WTC11 (cell line): ENCODE measurements at regions of chr3 and their contacts with region 1.

Region 1: DNA sequence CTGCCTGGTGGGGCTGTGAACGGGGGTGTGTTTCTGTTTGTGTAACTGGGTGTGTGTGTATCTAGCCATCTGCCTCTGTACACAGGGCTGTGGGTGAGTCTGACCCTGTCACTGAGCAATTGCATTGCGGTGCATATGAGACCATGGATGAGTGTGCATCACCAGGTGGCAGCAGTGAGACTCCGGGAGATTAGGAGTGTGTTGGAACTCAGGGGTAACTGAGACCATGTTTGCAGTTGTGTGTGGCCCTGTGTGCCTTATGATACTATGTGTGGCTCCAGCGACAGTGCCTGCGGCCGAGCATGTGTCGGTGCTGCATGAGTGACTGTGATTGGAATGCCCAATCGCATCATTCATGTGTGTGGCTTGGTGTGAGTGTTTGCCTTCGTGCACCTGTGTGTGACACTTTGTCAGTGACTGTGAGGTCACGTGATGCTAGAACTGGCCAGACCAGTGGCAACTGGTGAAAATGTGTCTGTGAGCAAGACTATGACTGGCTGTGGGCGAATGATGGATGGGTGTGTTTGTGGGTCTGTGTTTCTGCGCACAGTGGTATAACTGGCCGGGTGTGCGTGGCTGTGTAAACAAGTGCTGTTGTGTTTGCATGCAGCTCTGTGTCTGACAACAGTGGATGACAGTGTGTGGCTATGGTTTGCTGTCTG is 14.0 kb downstream of the VILL start:
- DNase-seq: peak; percentile 72
- ATAC-seq: peak; percentile 58
- H3K4me3 Mint-ChIP-seq: no peak overlapping the region
- H3K27ac Mint-ChIP-seq: peak overlapping the region; percentile 76; the same call in 1 of the 2 replicates
- H3K4me1 Mint-ChIP-seq: peaks cover 5% of the 10 kb centered on the region
- H3K27me3 Mint-ChIP-seq: no peaks in the 10 kb centered on the region
- CTCF ChIP-seq: no peak

Region 2: GRCh38 chr3:37986479-37987314 is 17.8 kb before region 1 on chr3:
- CTCF ChIA-PET with region 1: interaction called, 10 read pairs
- POLR2A ChIA-PET with region 1: no interaction called
- DNase-seq: no peak
- ATAC-seq: peak; percentile 26
- H3K4me3 Mint-ChIP-seq: no peak overlapping the region
- H3K27ac Mint-ChIP-seq: no peak overlapping the region
- H3K4me1 Mint-ChIP-seq: peaks cover 13% of the 10 kb centered on the region
- H3K27me3 Mint-ChIP-seq: no peaks in the 10 kb centered on the region; the same call in 1 of the 2 replicates
- CTCF ChIP-seq: no peak